ENCODE measurements at regions of chr1 and their contacts with region 1.

Region 1: DNA sequence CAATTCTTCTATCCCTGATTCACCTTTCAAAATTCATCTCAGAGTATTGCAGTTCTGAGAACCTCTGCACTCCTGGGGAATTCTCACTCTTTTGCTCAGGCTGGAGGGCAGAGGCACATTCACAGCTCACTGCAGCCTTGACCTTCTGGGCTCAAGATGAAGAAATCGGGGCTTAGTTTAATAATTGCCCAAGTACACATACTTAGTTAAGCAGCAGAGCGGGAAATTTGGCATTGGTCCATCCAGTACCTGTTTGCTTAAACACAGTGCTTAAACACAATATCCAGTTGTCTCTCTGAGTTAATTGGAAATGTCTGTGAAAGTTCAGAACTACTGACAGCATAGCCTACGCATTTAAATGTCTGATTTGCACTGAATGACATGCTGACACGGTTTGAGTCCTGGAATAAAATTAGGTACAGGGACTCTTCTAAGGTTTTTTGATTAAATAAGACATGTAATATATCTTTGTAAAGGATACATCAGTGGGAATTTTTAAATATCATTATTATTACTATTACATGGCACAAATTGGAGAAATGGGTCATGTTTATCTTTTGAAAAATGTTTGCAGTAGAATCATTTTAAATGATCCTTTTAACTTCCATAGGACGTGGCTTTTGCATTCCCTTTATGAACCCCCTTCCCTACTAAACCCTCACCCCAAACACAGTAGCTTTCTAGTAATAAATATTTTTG is 337.4 kb downstream of the SRGAP2C start:
- DNase-seq: no peak
- ATAC-seq: no peak
- H3K4me3 ChIP-seq: no peak overlapping the region
- H3K27ac ChIP-seq: no peak overlapping the region
- H3K4me1 ChIP-seq: no peaks in the 10 kb centered on the region
- H3K27me3 ChIP-seq: peaks cover 0 to 2% of the 10 kb centered on the region in 2 experiments; a peak in 2 of 4 replicates
- CTCF ChIP-seq: no peak
- EP300 ChIP-seq: no peak
- POLR2A ChIP-seq: no peak
- RAD21 ChIP-seq: no peak

Region 2: GRCh38 chr1:121586369-121587229 is 64.4 kb after region 1 on chr1:
- CTCF ChIA-PET with region 1: no interaction called
- POLR2A ChIA-PET with region 1: no interaction called
- RAD21 ChIA-PET with region 1: no interaction called
- SMC1A ChIA-PET with region 1: no interaction called
- in situ Hi-C with region 1: no loop called
- intact Hi-C with region 1: loop called (anchors 10 kb)
- DNase-seq: no peak
- ATAC-seq: no peak
- H3K4me3 ChIP-seq: no peak overlapping the region
- H3K27ac ChIP-seq: no peak overlapping the region
- H3K4me1 ChIP-seq: no peaks in the 10 kb centered on the region
- H3K27me3 ChIP-seq: no peaks in the 10 kb centered on the region
- CTCF ChIP-seq: no peak
- EP300 ChIP-seq: no peak
- POLR2A ChIP-seq: no peak
- RAD21 ChIP-seq: no peak

Measured in GM12878 (cell line).